MCF 10A (cell line): ENCODE measurements at regions of chr4 and their contacts with region 1.

Region 1: DNA sequence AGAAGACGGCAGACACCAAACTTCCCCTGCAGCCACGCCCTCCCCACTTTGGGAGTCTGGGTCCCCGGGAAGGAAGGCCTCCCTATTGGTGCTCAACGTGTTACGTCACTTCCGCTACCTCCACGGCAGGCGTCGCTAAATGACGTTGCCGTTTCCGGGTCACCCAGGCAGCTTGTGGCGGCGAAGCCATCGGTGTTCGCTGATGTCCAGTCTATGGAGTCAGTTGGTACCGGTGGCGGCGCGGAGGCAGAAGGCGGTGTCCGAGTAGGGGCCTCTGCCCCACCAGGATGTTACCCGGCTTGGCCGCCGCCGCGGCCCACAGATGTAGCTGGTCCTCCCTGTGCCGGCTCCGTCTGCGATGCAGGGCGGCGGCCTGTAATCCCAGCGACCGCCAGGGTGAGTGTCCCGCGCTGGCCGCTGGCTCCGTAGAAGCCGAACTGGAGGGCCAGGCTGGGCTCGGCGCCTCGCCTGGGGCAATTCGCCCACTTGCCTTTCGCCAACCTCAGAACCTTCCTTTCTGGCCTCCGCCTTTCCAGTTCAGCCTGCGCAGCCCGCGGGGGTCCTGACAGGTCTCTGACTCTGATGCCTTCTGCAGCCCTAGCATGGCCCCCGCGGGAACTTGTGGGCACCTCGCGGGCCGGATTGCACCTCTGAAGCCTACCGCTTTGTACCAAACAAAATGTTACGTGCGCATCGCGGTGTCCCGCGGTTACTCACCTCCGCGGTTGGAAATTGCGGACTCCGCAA is at the start of gene SLC30A9:
- DNase-seq: peak; percentile 95
- H3K4me3 Mint-ChIP-seq: peak within 1 kb of the TSS; percentile 97
- H3K27ac Mint-ChIP-seq: peak within 1 kb of the TSS; percentile 93
- H3K4me1 Mint-ChIP-seq: peaks cover 6% of the 10 kb centered on the region
- H3K27me3 Mint-ChIP-seq: no peaks in the 10 kb centered on the region
- CTCF ChIP-seq: peak; percentile 14
- total RNA-seq, gene SLC30A9: 58.5 and 64.9 TPM in 2 replicates

Region 2: GRCh38 chr4:41294445-41295062 is 696.0 kb before region 1 on chr4:
- CTCF ChIA-PET with region 1: no interaction called
- POLR2A ChIA-PET with region 1: no interaction called
- intact Hi-C with region 1: no loop called
- DNase-seq: no peak
- H3K4me3 Mint-ChIP-seq: no peak overlapping the region
- H3K27ac Mint-ChIP-seq: no peak overlapping the region
- H3K4me1 Mint-ChIP-seq: peaks cover 4% of the 10 kb centered on the region
- H3K27me3 Mint-ChIP-seq: no peaks in the 10 kb centered on the region
- CTCF ChIP-seq: no peak

Region 3: GRCh38 chr4:41977709-41978108 is 12.8 kb before region 1 on chr4:
- CTCF ChIA-PET with region 1: interaction called, 4 read pairs
- POLR2A ChIA-PET with region 1: interaction called, 13 read pairs
- intact Hi-C with region 1: no loop called
- DNase-seq: no peak
- H3K4me3 Mint-ChIP-seq: no peak overlapping the region
- H3K27ac Mint-ChIP-seq: no peak overlapping the region
- H3K4me1 Mint-ChIP-seq: no peaks in the 10 kb centered on the region
- H3K27me3 Mint-ChIP-seq: no peaks in the 10 kb centered on the region
- CTCF ChIP-seq: no peak

Region 4: GRCh38 chr4:42008011-42008786 is 17.7 kb after region 1 on chr4:
- CTCF ChIA-PET with region 1: interaction called, 4 read pairs
- POLR2A ChIA-PET with region 1: interaction called, 13 read pairs
- intact Hi-C with region 1: no loop called
- DNase-seq: no peak
- H3K4me3 Mint-ChIP-seq: no peak overlapping the region
- H3K27ac Mint-ChIP-seq: no peak overlapping the region
- H3K4me1 Mint-ChIP-seq: peaks cover 19% of the 10 kb centered on the region
- H3K27me3 Mint-ChIP-seq: no peaks in the 10 kb centered on the region
- CTCF ChIP-seq: no peak

Region 5: DNA sequence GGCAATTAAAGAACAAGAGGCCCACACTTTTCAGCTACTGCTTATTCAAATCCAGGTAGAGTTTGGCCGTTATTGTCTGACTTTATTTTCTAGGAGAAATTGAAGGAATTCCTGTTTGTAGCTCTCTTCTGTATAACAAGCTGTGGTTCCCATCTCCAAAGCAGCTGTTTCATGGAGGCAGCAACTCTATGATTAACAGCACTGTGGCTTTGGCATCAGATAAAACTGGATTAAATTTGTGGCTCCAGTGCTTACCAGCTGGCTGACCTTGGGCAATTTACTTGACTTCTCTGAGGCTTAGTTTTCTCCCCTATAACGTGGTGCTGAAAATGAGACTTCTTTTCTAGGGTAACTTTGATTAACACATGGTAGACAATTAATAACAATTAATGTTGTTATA is 27.9 kb after region 1 on chr4:
- CTCF ChIA-PET with region 1: no interaction called
- POLR2A ChIA-PET with region 1: interaction called, 14 read pairs
- intact Hi-C with region 1: no loop called
- DNase-seq: no peak
- H3K4me3 Mint-ChIP-seq: no peak overlapping the region
- H3K27ac Mint-ChIP-seq: no peak overlapping the region
- H3K4me1 Mint-ChIP-seq: peaks cover 6% of the 10 kb centered on the region
- H3K27me3 Mint-ChIP-seq: no peaks in the 10 kb centered on the region
- CTCF ChIP-seq: no peak